ENCODE measurements at regions of chr6 and their contacts with region 1.

Region 1: GRCh38 chr6:24387818-24388217 is 14.9 kb upstream of the MRS2 start:
- DNase-seq: no peak
- H3K4me3 Mint-ChIP-seq: no peak overlapping the region
- H3K27ac Mint-ChIP-seq: no peak overlapping the region
- H3K4me1 Mint-ChIP-seq: peaks cover 4% of the 10 kb centered on the region
- H3K27me3 Mint-ChIP-seq: peaks cover 20% of the 10 kb centered on the region

Region 2: DNA sequence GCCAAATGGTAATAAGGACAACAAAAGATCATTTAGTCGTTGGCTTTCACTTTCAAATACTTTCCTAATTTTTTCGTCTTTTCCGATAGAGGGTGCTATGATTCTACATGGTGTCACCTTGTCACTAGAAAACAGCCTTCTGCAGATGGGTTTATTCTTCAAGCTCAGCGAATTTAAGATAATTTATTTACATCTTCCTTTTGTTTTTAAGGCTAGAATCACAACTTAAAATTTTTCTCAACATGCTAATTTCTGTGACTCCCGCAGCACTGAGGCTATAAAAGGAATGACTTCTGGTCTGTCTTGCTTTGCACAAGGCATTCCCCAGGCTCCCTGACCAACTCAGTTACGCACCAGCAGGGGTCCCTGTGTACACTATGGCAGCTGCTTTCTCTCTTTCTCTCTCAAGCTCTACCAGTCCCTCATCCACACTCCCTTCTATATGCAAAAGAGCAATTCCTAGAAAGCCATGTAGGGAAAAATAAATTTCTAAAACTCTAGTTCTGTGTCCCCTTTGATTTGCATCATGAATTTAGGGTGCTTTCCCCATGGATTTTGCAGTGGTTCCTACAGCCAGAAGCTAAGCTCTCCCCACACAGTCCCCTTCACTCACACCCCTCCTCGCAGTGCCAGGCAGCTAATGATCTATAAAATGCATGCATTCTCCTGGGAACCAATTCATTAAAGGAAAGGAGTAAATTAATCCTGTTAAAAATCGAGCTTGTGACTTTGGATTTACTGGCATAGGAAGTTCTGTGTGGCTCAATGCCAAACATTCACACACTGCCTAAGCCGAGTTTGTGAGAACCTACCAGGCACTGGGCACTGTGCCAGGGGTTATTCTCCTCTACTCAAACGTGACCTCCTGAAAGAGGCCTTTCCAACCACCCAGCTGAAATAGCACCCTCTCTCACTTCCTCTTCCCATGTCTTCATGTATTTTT is 104.5 kb before region 1 on chr6:
- CTCF ChIA-PET with region 1: interaction called, 18 read pairs
- DNase-seq: peak; percentile 54
- H3K4me3 Mint-ChIP-seq: no peak overlapping the region
- H3K27ac Mint-ChIP-seq: no peak overlapping the region
- H3K4me1 Mint-ChIP-seq: peaks cover 8% of the 10 kb centered on the region
- H3K27me3 Mint-ChIP-seq: peaks cover 13% of the 10 kb centered on the region